Mucosa of descending colon (tissue), 3 donors: ENCODE measurements at regions of chr6 and their contacts with region 1.

Region 1: GRCh38 chr6:2931970-2932748 is 29.1 kb upstream of the SERPINB9 start:
- DNase-seq: peak in 2 of 3 donors; percentile 86 to 96
- ATAC-seq: peak; percentile 100
- H3K4me3 ChIP-seq: no peak overlapping the region
- H3K4me1 ChIP-seq: peaks cover 4% of the 10 kb centered on the region
- CTCF ChIP-seq: peak; percentile 96

Region 2: DNA sequence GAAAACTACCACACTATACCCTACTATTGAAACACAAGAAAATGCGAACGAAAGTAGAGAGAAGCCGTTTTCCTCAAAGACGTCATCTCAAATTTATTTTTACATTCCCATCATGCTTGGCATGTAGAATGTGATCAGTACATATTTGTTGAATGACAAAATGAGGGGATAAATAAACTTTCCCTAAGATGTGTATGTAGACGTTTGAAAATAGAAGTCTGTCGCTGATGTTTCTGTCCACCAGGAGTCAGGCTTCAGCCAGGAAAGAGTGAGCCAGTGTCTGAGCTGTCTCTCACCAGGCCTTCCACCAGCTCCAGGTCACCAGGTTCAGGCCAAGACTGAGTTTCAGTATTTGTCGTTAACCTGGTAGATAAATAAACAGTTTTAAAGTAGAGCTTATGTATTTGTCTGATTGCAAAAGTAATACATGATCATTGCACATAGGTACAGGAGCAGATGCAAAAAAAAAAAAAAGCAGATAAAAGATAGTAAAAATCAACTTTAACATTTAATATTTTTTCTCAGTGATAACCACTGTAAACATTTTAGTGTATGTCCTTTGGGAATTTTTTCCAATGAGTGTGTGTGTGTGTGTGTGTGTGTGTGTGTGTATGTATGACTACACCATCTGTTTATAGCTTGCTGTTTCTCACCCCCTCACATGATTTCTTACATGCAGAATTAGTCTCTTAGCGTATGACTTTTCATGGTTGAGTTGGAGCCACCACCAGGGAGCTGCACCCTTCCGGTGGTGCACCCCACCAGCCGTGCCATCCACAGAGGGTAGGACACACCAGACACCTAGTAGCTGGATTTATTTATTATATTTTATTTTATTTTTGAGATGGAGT is 140.8 kb before region 1 on chr6:
- intact Hi-C with region 1: loop called in 1 of 2 experiments (anchors 5 kb)
- DNase-seq: peak in 2 of 3 donors; percentile 61 to 85
- ATAC-seq: peak; percentile 87
- H3K4me3 ChIP-seq: no peak overlapping the region
- H3K4me1 ChIP-seq: peaks cover 6% of the 10 kb centered on the region
- CTCF ChIP-seq: peak; percentile 31

Region 3: DNA sequence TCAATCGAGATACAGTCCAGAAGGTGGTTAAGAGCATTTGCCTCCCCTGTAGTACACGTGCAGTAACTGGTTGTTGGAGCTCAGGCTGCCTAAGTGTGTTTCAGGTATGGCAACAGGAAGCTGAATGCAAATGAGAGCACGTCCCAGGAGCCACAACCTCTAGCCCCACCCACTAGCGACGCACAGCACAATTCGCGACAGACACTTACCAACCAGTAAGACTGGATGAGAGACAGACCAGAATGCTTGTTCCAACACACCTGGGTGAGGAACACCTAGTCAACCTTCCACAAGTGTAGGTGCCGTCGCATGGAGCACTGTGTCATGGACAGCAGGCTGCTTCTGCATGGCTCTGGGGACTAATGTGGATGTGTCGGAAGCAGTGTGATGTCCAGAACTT is 83.3 kb before region 1 on chr6:
- intact Hi-C with region 1: loop called (anchors 5 kb)
- DNase-seq: peak; percentile 68 to 76 (median 69)
- ATAC-seq: peak; percentile 74
- H3K4me3 ChIP-seq: no peak overlapping the region
- H3K4me1 ChIP-seq: peaks cover 3% of the 10 kb centered on the region
- CTCF ChIP-seq: no peak

Region 4: DNA sequence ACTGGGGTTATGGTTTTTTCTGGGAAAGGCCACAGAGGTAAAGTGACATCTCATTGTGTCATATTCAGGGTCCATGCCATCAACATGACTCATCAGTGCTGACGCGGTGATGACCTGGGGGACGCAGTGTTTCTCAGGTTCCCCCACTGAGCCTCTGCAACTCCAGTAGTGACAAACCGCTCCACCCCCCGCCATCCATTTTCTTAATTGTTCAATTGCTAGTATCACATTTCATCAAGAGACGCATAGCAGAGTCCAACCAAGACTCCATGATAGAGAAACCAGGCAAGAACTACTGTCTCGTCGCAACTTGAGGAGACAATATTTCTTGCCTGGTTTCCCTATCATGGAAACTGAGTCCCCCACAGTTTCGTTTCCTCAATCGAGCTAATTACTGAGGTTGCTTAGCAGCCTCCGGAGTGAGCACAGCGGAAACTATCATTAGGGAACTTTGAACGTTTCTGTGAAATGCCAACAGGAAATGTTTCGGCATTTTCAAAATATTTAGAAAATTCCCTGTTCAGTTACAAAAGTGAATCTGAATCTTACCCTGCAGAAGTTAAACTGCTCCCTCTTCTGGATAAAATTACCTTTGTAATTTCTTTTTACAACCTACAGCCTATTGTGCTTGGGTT is 78.3 kb before region 1 on chr6:
- intact Hi-C with region 1: loop called (anchors 5 kb)
- DNase-seq: peak in 1 of 3 donors; percentile 61
- ATAC-seq: peak; percentile 52
- H3K4me3 ChIP-seq: no peak overlapping the region
- H3K4me1 ChIP-seq: peaks cover 6% of the 10 kb centered on the region
- CTCF ChIP-seq: no peak